HEK293T (cell line): ENCODE measurements at regions of chr4 and their contacts with region 1.

Region 1: DNA sequence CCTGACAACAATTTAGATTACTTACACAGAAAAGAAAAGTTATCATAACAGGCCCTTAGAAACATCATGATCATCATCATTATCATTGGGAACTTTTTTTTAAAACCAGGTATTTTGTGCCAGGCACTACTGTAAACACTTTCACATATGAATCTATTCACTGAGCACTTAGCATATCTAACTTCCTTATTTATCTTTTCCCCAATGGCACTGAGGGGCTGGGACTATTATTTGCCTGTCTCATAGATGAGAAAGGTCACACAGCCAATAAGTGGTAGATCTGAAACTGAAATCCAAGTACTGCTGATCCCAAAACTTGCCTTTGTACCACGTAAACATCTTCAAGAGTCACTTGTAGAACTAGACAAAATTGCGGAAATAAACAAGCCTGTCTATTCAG is 184.2 kb upstream of the RBPJ start:
- DNase-seq: no peak

Region 2: DNA sequence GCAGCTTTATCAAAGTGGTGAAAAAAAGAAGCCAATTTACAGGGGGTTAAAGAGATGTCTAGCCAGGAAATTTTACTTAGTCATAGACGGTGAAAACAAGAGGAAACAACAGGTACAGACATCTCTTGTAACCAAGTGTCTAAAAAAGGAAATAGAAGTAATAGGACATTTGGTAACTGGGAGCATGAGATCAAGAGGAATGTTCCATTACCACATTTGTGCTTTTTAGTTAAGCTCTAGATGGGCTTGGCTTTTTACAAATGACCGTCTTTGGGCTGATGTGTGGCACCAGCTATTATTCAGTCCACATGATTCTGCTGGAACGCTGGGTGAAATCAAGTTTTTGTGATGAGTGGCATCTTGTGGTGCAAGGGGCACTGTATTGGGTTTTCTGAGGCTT is 43.1 kb before region 1 on chr4:
- CTCF ChIA-PET with region 1: no interaction called
- POLR2A ChIA-PET with region 1: no interaction called
- DNase-seq: no peak

Region 3: DNA sequence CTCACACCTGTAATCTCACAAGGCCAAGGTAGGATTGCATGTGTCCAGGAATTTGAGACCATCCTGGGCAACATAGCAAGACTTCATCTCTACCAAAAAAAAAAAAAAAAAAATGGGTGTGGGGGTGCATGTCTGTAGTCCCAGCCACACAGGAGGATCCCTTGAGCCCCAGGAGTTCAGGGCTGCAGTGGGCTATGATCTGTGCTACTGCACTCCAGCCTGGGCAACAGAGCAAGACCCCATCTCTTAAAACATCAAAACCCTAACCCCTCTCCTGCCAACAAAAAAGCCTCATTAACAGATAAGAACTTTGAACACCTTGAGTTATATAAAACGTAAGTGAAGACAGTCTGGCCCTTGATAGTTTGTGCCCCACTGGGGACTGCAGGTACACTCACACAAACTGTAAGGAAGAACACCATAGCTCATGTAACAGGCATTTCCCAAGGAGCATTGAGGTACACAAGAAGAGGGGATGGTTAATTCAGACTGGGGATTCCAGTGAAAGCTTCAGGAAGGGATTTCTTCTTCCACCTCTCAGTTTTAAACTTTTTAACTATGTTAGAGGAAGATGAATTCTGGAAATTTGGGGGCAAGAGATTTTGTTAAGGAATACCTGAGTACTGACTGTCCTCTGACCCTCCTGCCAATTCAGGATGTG is 218.9 kb after region 1 on chr4:
- CTCF ChIA-PET with region 1: interaction called, 10 read pairs
- POLR2A ChIA-PET with region 1: no interaction called
- DNase-seq: no peak

Region 4: DNA sequence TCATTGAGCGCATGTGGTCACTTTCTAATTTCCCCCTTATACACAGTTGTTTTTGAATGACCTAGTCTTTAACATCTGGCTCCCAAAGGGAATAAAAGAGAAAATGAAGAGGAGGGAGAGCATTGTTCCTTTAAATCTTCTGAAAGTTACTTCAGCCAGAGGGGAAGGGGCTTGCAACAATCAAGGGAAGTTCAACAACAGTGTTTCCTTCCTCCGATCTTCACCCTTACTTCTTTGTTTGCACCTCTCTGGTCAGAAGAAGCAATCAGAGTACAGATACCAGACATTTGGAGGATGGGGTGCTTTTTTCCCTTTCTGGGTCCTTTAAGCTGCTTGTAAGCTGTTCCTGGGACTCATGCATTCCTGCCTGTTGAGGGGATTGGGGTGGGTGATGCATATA is 572.6 kb after region 1 on chr4:
- CTCF ChIA-PET with region 1: no interaction called
- POLR2A ChIA-PET with region 1: no interaction called
- DNase-seq: no peak